ENCODE measurements at regions of chr12 and their contacts with region 1.

Region 1: DNA sequence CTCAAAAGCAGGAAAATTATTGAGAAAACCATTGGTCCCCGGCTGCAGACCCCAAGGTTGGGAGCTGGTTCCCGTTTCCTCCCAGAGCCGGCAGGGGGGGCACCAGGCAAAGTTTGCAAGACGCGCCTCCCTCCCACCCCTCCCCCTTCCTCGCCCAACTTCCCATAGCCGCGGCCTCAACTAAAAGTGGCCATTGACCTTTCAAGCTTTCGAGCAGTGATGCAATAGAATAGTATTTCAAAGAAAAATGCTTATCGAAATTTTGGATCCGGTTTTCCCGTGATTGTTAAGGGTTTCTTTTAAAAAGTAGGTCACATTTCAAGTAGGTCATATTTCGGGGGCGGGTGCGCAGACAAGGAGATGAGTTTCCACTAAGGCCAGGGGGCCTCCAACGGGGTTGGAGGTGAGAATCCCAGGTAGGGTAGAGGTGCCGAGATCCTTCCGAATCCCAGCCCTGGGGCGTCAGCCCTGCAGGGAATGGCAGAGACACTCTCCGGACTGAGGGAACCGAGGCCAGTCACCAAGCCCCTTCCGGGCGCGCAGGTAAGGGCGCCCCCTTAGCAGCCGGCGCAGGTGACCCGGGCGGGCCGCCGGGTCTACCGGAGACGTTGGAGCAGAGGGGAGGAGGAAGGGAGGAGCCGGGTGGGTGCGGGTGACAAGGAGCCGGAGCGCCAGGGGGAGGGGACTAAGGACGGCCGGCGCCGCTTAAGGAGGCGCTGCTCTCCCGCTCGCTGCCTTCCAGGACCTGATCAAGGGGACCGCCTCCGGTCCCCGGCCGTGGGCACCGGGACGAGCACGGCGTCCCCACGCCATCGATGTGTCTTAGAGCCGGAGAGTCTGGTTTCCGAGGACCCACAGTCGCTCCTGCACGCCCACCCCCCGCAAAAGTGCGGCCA is 2.6 kb upstream of the SOCS2 start:
- DNase-seq: peak; percentile 80 to 89 (median 89)
- ATAC-seq: peak; percentile 51 to 64 (median 56)
- H3K4me3 ChIP-seq: peak overlapping the region; percentile 72 to 94 (median 90)
- H3K27ac ChIP-seq: peak overlapping the region; percentile 93 to 96 (median 95)
- H3K4me1 ChIP-seq: peaks cover 0 to 20% (median 7%) of the 10 kb centered on the region in 4 donors
- H3K27me3 ChIP-seq: no peaks in the 10 kb centered on the region
- CTCF ChIP-seq: peak; percentile 57 to 77 (median 72)
- POLR2A ChIP-seq: no peak

Region 2: GRCh38 chr12:93638095-93638494 is 68.2 kb after region 1 on chr12:
- intact Hi-C with region 1: no loop called
- DNase-seq: no peak
- ATAC-seq: peak in 3 of 4 donors; percentile 24 to 68 (median 56)
- H3K4me3 ChIP-seq: no peak overlapping the region
- H3K27ac ChIP-seq: no peak overlapping the region
- H3K4me1 ChIP-seq: no peaks in the 10 kb centered on the region
- H3K27me3 ChIP-seq: no peaks in the 10 kb centered on the region
- CTCF ChIP-seq: no peak
- POLR2A ChIP-seq: no peak

Region 3: GRCh38 chr12:93663006-93663728 is 93.3 kb after region 1 on chr12:
- intact Hi-C with region 1: no loop called
- DNase-seq: peak; percentile 65 to 85 (median 80)
- ATAC-seq: peak; percentile 96 to 99 (median 97)
- H3K4me3 ChIP-seq: no peak overlapping the region
- H3K27ac ChIP-seq: peak overlapping the region in 2 of 3 donors; percentile 9 to 65
- H3K4me1 ChIP-seq: peaks cover 0 to 9% (median 2%) of the 10 kb centered on the region in 4 donors
- H3K27me3 ChIP-seq: no peaks in the 10 kb centered on the region
- CTCF ChIP-seq: no peak
- POLR2A ChIP-seq: no peak

Region 4: GRCh38 chr12:93677195-93678064 is 107.5 kb after region 1 on chr12 and contains the start of gene CRADD:
- intact Hi-C with region 1: loop called (anchors 5 to 10 kb)
- DNase-seq: peak; percentile 66 to 82 (median 79)
- ATAC-seq: peak; percentile 88 to 95 (median 92)
- H3K4me3 ChIP-seq: peak within 1 kb of the TSS; percentile 59 to 71 (median 63)
- H3K27ac ChIP-seq: peak within 1 kb of the TSS; percentile 96 to 99 (median 96)
- H3K4me1 ChIP-seq: peaks cover 0 to 22% (median 9%) of the 10 kb centered on the region in 4 donors
- H3K27me3 ChIP-seq: no peaks in the 10 kb centered on the region
- CTCF ChIP-seq: peak in 1 of 4 donors; percentile 5
- POLR2A ChIP-seq: peak; percentile 79
- total RNA-seq, gene CRADD: 17.2 to 65.3 (median 30.8) TPM